Activated CD8-positive, alpha-beta T cell treated with anti-CD3 and anti-CD28 coated beads, Interleukin-2, amount 10 ng/mL, durations not matched to agents 7 days and 5 days (primary cell): ENCODE measurements at regions of chr12 and their contacts with region 1.

Region 1: GRCh38 chr12:82375201-82375600 is 16.9 kb downstream of the METTL25 start:
- DNase-seq: no peak
- ATAC-seq: no peak
- H3K4me3 Mint-ChIP-seq: no peak overlapping the region
- H3K27ac Mint-ChIP-seq: no peak overlapping the region
- H3K4me1 Mint-ChIP-seq: no peaks in the 10 kb centered on the region
- H3K27me3 Mint-ChIP-seq: no peaks in the 10 kb centered on the region

Region 2: DNA sequence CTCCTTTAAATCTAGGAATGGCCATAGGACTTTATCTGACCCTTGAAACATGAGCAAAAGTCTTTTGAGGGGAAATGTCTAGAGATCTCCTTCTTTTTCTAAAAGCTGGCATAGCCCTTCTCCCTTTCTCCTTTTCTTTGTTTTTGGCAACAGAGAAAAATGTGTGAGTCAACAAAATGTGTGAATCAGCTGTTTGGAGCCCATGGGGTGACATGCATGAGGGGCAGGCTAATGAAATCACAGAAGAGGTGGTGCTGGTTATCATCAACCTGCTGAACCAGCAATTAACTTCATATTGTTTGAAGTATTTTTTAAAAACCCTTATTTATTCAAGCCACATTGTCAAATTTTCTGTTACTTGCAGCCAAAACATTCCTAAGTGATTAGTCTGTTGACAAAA is 149.3 kb before region 1 on chr12:
- CTCF ChIA-PET with region 1: no interaction called
- POLR2A ChIA-PET with region 1: no interaction called
- DNase-seq: no peak
- ATAC-seq: no peak
- H3K4me3 Mint-ChIP-seq: no peak overlapping the region
- H3K27ac Mint-ChIP-seq: no peak overlapping the region
- H3K4me1 Mint-ChIP-seq: no peaks in the 10 kb centered on the region
- H3K27me3 Mint-ChIP-seq: no peaks in the 10 kb centered on the region

Region 3: DNA sequence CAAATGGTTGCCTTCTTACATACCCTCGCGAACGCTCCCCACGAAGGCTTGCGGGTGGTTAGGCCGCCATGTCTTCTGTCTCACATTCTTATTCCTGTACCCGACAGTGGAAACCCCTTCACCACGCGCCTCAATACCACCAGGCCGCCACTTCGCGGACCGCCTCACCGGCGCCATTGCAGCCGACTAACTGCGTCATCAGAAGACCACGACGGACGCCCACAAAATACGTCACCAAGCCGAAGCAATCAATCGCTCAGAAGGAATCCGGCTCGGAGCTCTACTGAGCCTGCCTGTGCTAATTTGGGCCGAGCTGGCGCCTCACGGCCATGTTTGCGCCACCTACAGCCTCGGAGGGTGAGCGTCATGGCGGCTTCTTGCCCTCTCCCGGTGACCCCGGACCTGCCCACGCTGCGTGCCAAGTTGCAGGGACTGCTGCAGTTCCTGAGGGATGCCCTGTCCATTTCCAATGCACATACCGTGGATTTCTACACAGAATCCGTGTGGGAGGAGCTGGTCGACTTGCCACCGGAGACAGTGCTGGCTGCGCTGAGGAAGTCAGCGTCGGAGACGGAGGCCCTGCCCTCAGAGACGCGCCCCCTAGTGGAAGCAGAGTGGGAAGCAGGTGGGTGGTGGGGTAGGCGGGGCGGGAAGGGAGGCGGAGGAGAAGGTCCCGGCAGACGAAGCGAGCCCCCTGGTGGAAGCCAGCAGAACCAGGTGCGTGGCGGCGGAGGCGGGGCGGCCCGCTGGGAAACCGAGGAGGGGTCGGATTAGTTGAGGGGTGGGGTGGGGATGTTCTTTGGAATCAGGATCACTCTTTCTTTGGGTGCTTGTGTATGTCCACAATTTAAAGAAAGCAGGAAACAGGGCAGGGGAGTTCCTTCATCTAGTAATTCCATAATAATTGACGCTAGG is 16.7 kb before region 1 on chr12 and contains the starts of genes CCDC59 and METTL25:
- CTCF ChIA-PET with region 1: interaction called, 20 read pairs
- POLR2A ChIA-PET with region 1: interaction called, 6 read pairs
- DNase-seq: peak; percentile 97
- ATAC-seq: peak; percentile 97
- H3K4me3 Mint-ChIP-seq: peak within 1 kb of the TSS; percentile 93
- H3K27ac Mint-ChIP-seq: peak within 1 kb of the TSS; percentile 99
- H3K4me1 Mint-ChIP-seq: peaks cover 42% of the 10 kb centered on the region
- H3K27me3 Mint-ChIP-seq: no peaks in the 10 kb centered on the region
- total RNA-seq, gene CCDC59: 45.1 to 49.0 TPM
- total RNA-seq, gene METTL25: 10.4 to 10.7 TPM